ENCODE measurements at regions of chr22 and their contacts with region 1.

Region 1: GRCh38 chr22:39622881-39623367 is 52.4 kb downstream of the CACNA1I start:
- DNase-seq: peak; percentile 39 to 84 (median 67)
- ATAC-seq: peak; percentile 72
- H3K4me3 ChIP-seq: no peak overlapping the region
- H3K4me3 Mint-ChIP-seq: no peak overlapping the region
- H3K27ac ChIP-seq: no peak overlapping the region
- H3K27ac Mint-ChIP-seq: no peak overlapping the region
- H3K4me1 ChIP-seq: peaks cover 1% of the 10 kb centered on the region
- H3K4me1 Mint-ChIP-seq: peaks cover 4% of the 10 kb centered on the region
- H3K27me3 ChIP-seq: peaks cover 0 to 12% of the 10 kb centered on the region in 2 experiments
- H3K27me3 Mint-ChIP-seq: peaks cover 20% of the 10 kb centered on the region
- CTCF ChIP-seq: peak; percentile 43

Region 2: GRCh38 chr22:39940757-39941305 is 317.9 kb after region 1 on chr22:
- CTCF ChIA-PET with region 1: no interaction called
- POLR2A ChIA-PET with region 1: no interaction called
- intact Hi-C with region 1: loop called (anchors 1 kb)
- DNase-seq: peak in 2 of 9 experiments; percentile 78 to 87
- ATAC-seq: peak; percentile 49
- H3K4me3 ChIP-seq: peak overlapping the region in 1 of 2 experiments; percentile 40
- H3K4me3 Mint-ChIP-seq: peak overlapping the region; percentile 56
- H3K27ac ChIP-seq: peak overlapping the region; percentile 22 to 76
- H3K27ac Mint-ChIP-seq: no peak overlapping the region
- H3K4me1 ChIP-seq: peaks cover 98% of the 10 kb centered on the region
- H3K4me1 Mint-ChIP-seq: peaks cover 92% of the 10 kb centered on the region
- H3K27me3 ChIP-seq: no peaks in the 10 kb centered on the region
- H3K27me3 Mint-ChIP-seq: no peaks in the 10 kb centered on the region
- CTCF ChIP-seq: peak; percentile 62

Measured in CD8-positive, alpha-beta T cell (primary cell).